IMR-90 (cell line): ENCODE measurements at regions of chr5 and their contacts with region 1.

Region 1: DNA sequence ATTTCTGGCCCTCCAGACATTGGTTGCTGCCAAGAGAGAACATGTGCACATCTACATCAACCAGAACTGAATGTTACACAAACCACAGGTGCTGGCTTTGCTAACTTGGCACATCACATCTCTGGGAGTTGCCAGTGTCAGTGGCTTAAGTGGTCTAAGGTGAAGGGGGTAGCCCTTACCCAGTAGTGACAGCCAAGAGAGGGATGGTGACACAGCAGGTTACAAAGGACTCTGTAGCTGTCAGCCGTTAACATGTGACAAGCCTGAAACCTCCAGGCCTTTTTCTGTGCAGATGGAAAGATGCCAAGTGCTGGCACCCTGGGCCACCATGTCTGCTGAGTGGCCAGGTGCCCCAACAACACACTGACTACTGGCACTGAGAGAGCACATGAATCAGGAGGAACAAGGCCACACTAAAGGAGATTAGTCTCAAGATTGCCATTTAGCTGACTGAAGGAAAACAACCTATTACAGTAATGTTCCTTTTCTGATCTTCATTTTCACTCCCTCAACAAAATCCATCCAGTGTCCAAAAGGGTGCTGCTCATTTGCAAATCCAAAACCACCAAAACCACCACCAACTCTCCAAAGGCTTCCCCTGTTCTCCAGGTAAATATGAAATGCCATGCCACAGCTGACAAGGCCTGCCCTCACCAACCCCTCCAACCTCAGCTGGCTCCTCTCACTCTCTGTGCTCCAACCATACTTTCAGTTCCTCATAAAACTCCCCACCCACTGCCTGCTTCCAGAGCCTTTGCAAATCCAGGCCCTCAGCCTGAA is 20.2 kb downstream of the SIL1 start:
- DNase-seq: peak; percentile 18
- ATAC-seq: peak; percentile 35
- H3K4me3 ChIP-seq: no peak overlapping the region
- H3K27ac ChIP-seq: no peak overlapping the region; the same call in 1 of the 2 replicates
- H3K4me1 ChIP-seq: peaks cover 13% of the 10 kb centered on the region
- H3K27me3 ChIP-seq: no peaks in the 10 kb centered on the region
- CTCF ChIP-seq: no peak
- POLR2A ChIP-seq: no peak
- RAD21 ChIP-seq: no peak

Region 2: GRCh38 chr5:138533973-138534941 is 643.7 kb before region 1 on chr5:
- CTCF ChIA-PET with region 1: no interaction called
- POLR2A ChIA-PET with region 1: interaction called, 11 read pairs
- dilution Hi-C with region 1: no loop called
- in situ Hi-C with region 1: no loop called
- intact Hi-C with region 1: no loop called
- DNase-seq: no peak
- ATAC-seq: no peak
- H3K4me3 ChIP-seq: no peak overlapping the region
- H3K27ac ChIP-seq: no peak overlapping the region
- H3K4me1 ChIP-seq: no peaks in the 10 kb centered on the region
- H3K27me3 ChIP-seq: no peaks in the 10 kb centered on the region
- CTCF ChIP-seq: no peak
- POLR2A ChIP-seq: peak; percentile 44
- RAD21 ChIP-seq: no peak